Upper lobe of right lung (tissue), 1 donor: ENCODE measurements at regions of chr7 and their contacts with region 1.

Region 1: GRCh38 chr7:132577206-132578049 is 1.2 kb upstream of the PLXNA4 start:
- DNase-seq: peak; percentile 76
- ATAC-seq: peak; percentile 45
- H3K4me3 ChIP-seq: peak overlapping the region; percentile 30
- H3K27ac ChIP-seq: no peak overlapping the region
- H3K4me1 ChIP-seq: peaks cover 12% of the 10 kb centered on the region
- H3K27me3 ChIP-seq: peaks cover 44% of the 10 kb centered on the region
- CTCF ChIP-seq: no peak

Region 2: GRCh38 chr7:132321387-132321786 is 256.0 kb before region 1 on chr7:
- intact Hi-C with region 1: loop called (anchors 5 kb)
- DNase-seq: no peak
- ATAC-seq: no peak
- H3K4me3 ChIP-seq: no peak overlapping the region
- H3K27ac ChIP-seq: no peak overlapping the region
- H3K4me1 ChIP-seq: no peaks in the 10 kb centered on the region
- H3K27me3 ChIP-seq: peaks cover 3% of the 10 kb centered on the region
- CTCF ChIP-seq: no peak

Region 3: DNA sequence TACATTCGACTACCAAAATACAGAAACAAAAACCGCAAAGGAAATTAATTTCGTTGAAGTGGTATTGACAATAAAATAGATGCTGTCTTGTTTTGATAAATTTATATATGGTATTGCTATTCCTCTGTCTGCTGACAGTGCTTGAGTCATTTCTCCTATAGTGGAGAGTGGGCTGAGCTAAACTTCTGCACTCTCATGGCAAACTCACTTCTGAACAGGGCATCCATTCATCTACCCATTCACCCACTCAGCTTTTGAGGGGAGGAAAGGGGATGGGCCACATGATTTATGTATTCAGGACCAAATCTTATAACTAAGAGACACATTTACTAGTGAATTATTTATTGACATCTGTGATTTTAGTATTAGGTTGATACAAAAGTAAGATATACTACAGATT is 136.5 kb after region 1 on chr7:
- intact Hi-C with region 1: no loop called
- DNase-seq: no peak
- ATAC-seq: no peak
- H3K4me3 ChIP-seq: no peak overlapping the region
- H3K27ac ChIP-seq: no peak overlapping the region
- H3K4me1 ChIP-seq: no peaks in the 10 kb centered on the region
- H3K27me3 ChIP-seq: no peaks in the 10 kb centered on the region
- CTCF ChIP-seq: no peak

Region 4: GRCh38 chr7:133517766-133518165 is 940.3 kb after region 1 on chr7:
- intact Hi-C with region 1: no loop called
- DNase-seq: no peak
- ATAC-seq: no peak
- H3K4me3 ChIP-seq: no peak overlapping the region
- H3K27ac ChIP-seq: no peak overlapping the region
- H3K4me1 ChIP-seq: no peaks in the 10 kb centered on the region
- H3K27me3 ChIP-seq: no peaks in the 10 kb centered on the region
- CTCF ChIP-seq: no peak